GM12878 (cell line): ENCODE measurements at regions of chr17 and their contacts with region 1.

Region 1: DNA sequence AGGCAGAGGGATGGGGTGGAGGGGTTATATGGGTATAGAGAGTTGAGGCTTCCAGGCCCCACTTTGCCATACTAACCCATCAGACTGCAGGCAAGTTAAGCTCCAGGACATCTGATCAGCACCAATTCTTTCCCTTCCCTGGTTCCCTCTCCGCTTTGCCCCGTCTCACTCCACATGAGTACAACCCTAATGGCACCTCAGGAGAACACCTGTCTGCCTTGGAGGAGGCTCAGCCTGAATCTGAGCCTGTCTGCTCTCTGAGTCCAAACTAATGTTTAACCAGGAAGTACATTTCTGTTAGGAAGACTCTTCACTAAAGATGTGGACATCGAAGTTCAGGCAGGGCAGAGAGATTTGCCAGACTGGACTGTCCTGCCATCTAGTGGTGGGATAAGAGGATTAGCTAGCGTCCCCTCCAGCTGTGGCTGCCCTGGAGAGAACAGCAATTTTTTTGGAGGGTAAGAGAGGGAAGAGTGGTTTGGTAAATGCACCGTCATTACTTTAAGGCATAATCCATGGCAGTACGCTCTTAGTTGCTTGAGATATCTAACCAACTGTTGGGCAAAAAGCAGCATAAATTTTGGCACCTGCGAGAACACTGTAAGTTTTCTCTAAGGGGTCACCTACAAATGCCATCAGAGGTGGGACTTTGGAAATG is 29.2 kb upstream of the LRRC75A start:
- DNase-seq: peak; percentile 39
- ATAC-seq: peak; percentile 98
- H3K4me3 ChIP-seq: no peak overlapping the region
- H3K27ac ChIP-seq: no peak overlapping the region
- H3K4me1 ChIP-seq: 0 out of 2 replicates have a peak, but pooled peaks cover 2% of the 10 kb centered on the region
- H3K27me3 ChIP-seq: no peaks in the 10 kb centered on the region
- CTCF ChIP-seq: peak; percentile 89 to 97 (median 94)
- EP300 ChIP-seq: no peak
- POLR2A ChIP-seq: no peak
- RAD21 ChIP-seq: peak; percentile 91

Region 2: DNA sequence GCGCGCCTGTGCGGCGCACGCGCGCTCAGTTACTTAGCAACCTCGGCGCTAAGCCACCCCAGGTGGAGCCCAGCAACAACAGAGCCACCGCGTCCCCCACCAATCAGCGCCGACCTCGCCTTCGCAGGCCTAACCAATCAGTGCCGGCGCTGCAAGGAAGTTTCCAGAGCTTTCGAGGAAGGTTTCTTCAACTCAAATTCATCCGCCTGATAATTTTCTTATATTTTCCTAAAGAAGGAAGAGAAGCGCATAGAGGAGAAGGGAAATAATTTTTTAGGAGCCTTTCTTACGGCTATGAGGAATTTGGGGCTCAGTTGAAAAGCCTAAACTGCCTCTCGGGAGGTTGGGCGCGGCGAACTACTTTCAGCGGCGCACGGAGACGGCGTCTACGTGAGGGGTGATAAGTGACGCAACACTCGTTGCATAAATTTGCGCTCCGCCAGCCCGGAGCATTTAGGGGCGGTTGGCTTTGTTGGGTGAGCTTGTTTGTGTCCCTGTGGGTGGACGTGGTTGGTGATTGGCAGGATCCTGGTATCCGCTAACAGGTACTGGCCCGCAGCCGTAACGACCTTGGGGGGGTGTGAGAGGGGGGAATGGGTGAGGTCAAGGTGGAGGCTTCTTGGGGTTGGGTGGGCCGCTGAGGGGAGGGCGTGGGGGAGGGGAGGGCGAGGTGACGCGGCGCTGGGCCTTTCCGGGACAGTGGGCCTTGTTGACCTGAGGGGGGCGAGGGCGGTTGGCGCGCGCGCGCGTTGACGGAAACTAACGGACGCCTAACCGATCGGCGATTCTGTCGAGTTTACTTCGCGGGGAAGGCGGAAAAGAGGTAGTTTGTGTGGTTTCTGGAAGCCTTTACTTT is 140.3 kb before region 1 on chr17 and contains the start of gene UBB:
- CTCF ChIA-PET with region 1: interaction called, 5 read pairs
- POLR2A ChIA-PET with region 1: interaction called, 3 read pairs
- RAD21 ChIA-PET with region 1: interaction called, 3 read pairs
- SMC1A ChIA-PET with region 1: interaction called, 4 read pairs
- in situ Hi-C with region 1: no loop called
- intact Hi-C with region 1: loop called (anchors 1 kb)
- DNase-seq: peak; percentile 89
- ATAC-seq: peak; percentile 97
- H3K4me3 ChIP-seq: peak within 1 kb of the TSS; percentile 76
- H3K27ac ChIP-seq: peak within 1 kb of the TSS; percentile 100
- H3K4me1 ChIP-seq: peaks cover 16% of the 10 kb centered on the region
- H3K27me3 ChIP-seq: no peaks in the 10 kb centered on the region
- CTCF ChIP-seq: peak in 2 of 3 experiments; percentile 20 to 24; a peak in 2 of 6 replicates
- EP300 ChIP-seq: no peak; a peak in 2 of 4 replicates
- POLR2A ChIP-seq: peak; percentile 100
- RAD21 ChIP-seq: no peak
- polyA plus RNA-seq, gene UBB: 4,008 to 4,246 TPM

Region 3: DNA sequence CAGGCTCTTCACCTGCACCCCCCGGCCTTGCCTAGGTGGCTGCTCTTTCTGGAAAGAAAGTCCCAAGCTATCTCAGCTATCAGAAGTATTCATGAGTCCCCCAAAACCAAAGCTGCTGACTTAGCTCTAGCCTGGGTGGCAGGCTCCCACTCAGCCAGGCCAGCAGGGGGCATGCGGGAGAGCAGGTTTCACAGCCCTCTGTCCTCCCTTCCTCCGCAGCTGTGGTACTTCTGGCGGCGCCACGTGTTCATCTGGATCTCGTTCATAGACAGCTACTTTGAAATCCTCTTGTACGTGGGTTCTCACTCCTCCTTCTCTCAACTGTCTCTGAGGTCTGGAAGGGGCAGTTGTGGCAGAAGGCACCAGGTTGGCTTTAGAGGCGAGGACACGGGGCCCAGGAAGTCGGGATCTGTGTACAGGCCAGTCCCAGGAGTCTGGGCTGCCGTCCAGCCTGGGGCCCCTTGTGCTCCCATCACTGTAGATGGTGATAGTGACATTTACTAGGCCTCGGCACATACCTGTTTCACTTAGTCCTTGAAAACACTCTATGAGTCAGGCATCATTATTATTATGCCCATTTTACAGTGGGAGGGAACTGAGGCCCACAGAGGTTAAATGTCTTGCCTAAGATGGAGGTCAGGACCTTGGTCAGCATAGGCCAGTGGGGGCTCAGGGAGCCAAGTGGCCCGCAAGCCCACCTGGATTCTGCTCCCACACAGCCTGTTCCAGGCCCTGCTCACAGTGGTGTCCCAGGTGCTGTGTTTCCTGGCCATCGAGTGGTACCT is 92.9 kb before region 1 on chr17:
- CTCF ChIA-PET with region 1: interaction called, 14 read pairs
- POLR2A ChIA-PET with region 1: interaction called, 3 read pairs
- RAD21 ChIA-PET with region 1: interaction called, 4 read pairs
- SMC1A ChIA-PET with region 1: no interaction called
- in situ Hi-C with region 1: no loop called
- intact Hi-C with region 1: no loop called
- DNase-seq: no peak
- ATAC-seq: peak; percentile 93
- H3K4me3 ChIP-seq: no peak overlapping the region
- H3K27ac ChIP-seq: no peak overlapping the region
- H3K4me1 ChIP-seq: no peaks in the 10 kb centered on the region
- H3K27me3 ChIP-seq: no peaks in the 10 kb centered on the region
- CTCF ChIP-seq: peak; percentile 58 to 76 (median 75)
- EP300 ChIP-seq: no peak
- POLR2A ChIP-seq: no peak; the same call in 1 of the 2 replicates
- RAD21 ChIP-seq: peak; percentile 44

Region 4: GRCh38 chr17:16438557-16439302 is 82.5 kb before region 1 on chr17:
- CTCF ChIA-PET with region 1: interaction called, 22 read pairs
- POLR2A ChIA-PET with region 1: no interaction called
- RAD21 ChIA-PET with region 1: interaction called, 3 read pairs
- SMC1A ChIA-PET with region 1: interaction called, 4 read pairs
- in situ Hi-C with region 1: no loop called
- intact Hi-C with region 1: no loop called
- DNase-seq: peak; percentile 98
- ATAC-seq: peak; percentile 87
- H3K4me3 ChIP-seq: peak overlapping the region; percentile 97
- H3K27ac ChIP-seq: peak overlapping the region; percentile 79
- H3K4me1 ChIP-seq: peaks cover 15% of the 10 kb centered on the region
- H3K27me3 ChIP-seq: no peaks in the 10 kb centered on the region
- CTCF ChIP-seq: no peak
- EP300 ChIP-seq: peak in 1 of 2 experiments; percentile 28; a peak in 1 of 4 replicates
- POLR2A ChIP-seq: peak; percentile 96
- RAD21 ChIP-seq: no peak

Region 5: GRCh38 chr17:16444258-16444886 is 76.8 kb before region 1 on chr17:
- CTCF ChIA-PET with region 1: interaction called, 81 read pairs
- POLR2A ChIA-PET with region 1: no interaction called
- RAD21 ChIA-PET with region 1: interaction called, 3 read pairs
- SMC1A ChIA-PET with region 1: interaction called, 4 read pairs
- in situ Hi-C with region 1: no loop called
- intact Hi-C with region 1: no loop called
- DNase-seq: no peak
- ATAC-seq: peak; percentile 6
- H3K4me3 ChIP-seq: no peak overlapping the region
- H3K27ac ChIP-seq: no peak overlapping the region
- H3K4me1 ChIP-seq: peaks cover 11% of the 10 kb centered on the region
- H3K27me3 ChIP-seq: no peaks in the 10 kb centered on the region
- CTCF ChIP-seq: no peak
- EP300 ChIP-seq: no peak
- POLR2A ChIP-seq: peak; percentile 12; the same call in 1 of the 2 replicates
- RAD21 ChIP-seq: no peak

Region 6: DNA sequence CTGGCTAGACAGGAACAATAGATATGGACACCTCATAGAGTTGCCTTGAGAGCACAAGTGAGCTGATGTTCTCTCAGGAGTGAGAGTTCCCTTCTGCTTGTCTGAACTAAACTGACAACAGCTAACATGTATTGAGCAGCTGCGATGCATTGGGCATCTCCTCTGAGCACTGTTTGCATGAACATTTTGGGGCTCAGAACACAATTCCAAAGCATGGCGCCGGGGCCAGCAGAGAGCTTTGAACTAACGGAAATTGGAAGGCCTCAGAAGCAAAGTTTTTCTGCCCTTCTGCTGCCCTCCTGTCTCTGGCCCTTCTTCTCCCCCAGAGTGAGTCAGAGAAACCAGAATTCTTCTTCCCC is 67.7 kb before region 1 on chr17:
- CTCF ChIA-PET with region 1: interaction called, 81 read pairs
- POLR2A ChIA-PET with region 1: no interaction called
- RAD21 ChIA-PET with region 1: interaction called, 6 read pairs
- SMC1A ChIA-PET with region 1: interaction called, 16 read pairs
- in situ Hi-C with region 1: no loop called
- intact Hi-C with region 1: loop called (anchors 1 kb)
- DNase-seq: no peak
- ATAC-seq: no peak
- H3K4me3 ChIP-seq: no peak overlapping the region
- H3K27ac ChIP-seq: no peak overlapping the region
- H3K4me1 ChIP-seq: peaks cover 4% of the 10 kb centered on the region; the same call in 1 of the 2 replicates
- H3K27me3 ChIP-seq: no peaks in the 10 kb centered on the region
- CTCF ChIP-seq: no peak
- EP300 ChIP-seq: no peak
- POLR2A ChIP-seq: no peak
- RAD21 ChIP-seq: no peak

Region 7: GRCh38 chr17:16537130-16537458 is 15.9 kb after region 1 on chr17:
- CTCF ChIA-PET with region 1: interaction called, 16 read pairs
- POLR2A ChIA-PET with region 1: no interaction called
- RAD21 ChIA-PET with region 1: interaction called, 6 read pairs
- SMC1A ChIA-PET with region 1: interaction called, 9 read pairs
- in situ Hi-C with region 1: no loop called
- intact Hi-C with region 1: no loop called
- DNase-seq: no peak
- ATAC-seq: no peak
- H3K4me3 ChIP-seq: no peak overlapping the region
- H3K27ac ChIP-seq: no peak overlapping the region
- H3K4me1 ChIP-seq: 0 out of 2 replicates have a peak, but pooled peaks cover 4% of the 10 kb centered on the region
- H3K27me3 ChIP-seq: no peaks in the 10 kb centered on the region
- CTCF ChIP-seq: no peak
- EP300 ChIP-seq: no peak
- POLR2A ChIP-seq: no peak
- RAD21 ChIP-seq: no peak

Region 8: GRCh38 chr17:16662936-16663335 is 141.7 kb after region 1 on chr17:
- CTCF ChIA-PET with region 1: no interaction called
- POLR2A ChIA-PET with region 1: no interaction called
- RAD21 ChIA-PET with region 1: no interaction called
- SMC1A ChIA-PET with region 1: no interaction called
- in situ Hi-C with region 1: no loop called
- intact Hi-C with region 1: no loop called
- DNase-seq: no peak
- ATAC-seq: no peak
- H3K4me3 ChIP-seq: no peak overlapping the region
- H3K27ac ChIP-seq: no peak overlapping the region
- H3K4me1 ChIP-seq: no peaks in the 10 kb centered on the region
- H3K27me3 ChIP-seq: no peaks in the 10 kb centered on the region; a peak in 1 of 4 replicates
- CTCF ChIP-seq: no peak
- EP300 ChIP-seq: no peak
- POLR2A ChIP-seq: no peak
- RAD21 ChIP-seq: no peak

Region 9: GRCh38 chr17:16954521-16954920 is 433.3 kb after region 1 on chr17:
- CTCF ChIA-PET with region 1: no interaction called
- POLR2A ChIA-PET with region 1: no interaction called
- RAD21 ChIA-PET with region 1: no interaction called
- SMC1A ChIA-PET with region 1: no interaction called
- in situ Hi-C with region 1: no loop called
- intact Hi-C with region 1: no loop called
- DNase-seq: no peak
- ATAC-seq: no peak
- H3K4me3 ChIP-seq: no peak overlapping the region
- H3K27ac ChIP-seq: peak overlapping the region; percentile 64
- H3K4me1 ChIP-seq: peaks cover 38% of the 10 kb centered on the region
- H3K27me3 ChIP-seq: no peaks in the 10 kb centered on the region
- CTCF ChIP-seq: no peak
- EP300 ChIP-seq: no peak
- POLR2A ChIP-seq: no peak
- RAD21 ChIP-seq: no peak